ENCODE measurements at regions of chr2 and their contacts with region 1.

Region 1: GRCh38 chr2:44342854-44343253 is 18.4 kb downstream of the PREPL start:
- DNase-seq: no peak
- ATAC-seq: no peak
- H3K4me3 Mint-ChIP-seq: no peak overlapping the region
- H3K27ac Mint-ChIP-seq: no peak overlapping the region
- H3K4me1 Mint-ChIP-seq: no peaks in the 10 kb centered on the region
- H3K27me3 Mint-ChIP-seq: no peaks in the 10 kb centered on the region
- CTCF ChIP-seq: no peak

Region 2: DNA sequence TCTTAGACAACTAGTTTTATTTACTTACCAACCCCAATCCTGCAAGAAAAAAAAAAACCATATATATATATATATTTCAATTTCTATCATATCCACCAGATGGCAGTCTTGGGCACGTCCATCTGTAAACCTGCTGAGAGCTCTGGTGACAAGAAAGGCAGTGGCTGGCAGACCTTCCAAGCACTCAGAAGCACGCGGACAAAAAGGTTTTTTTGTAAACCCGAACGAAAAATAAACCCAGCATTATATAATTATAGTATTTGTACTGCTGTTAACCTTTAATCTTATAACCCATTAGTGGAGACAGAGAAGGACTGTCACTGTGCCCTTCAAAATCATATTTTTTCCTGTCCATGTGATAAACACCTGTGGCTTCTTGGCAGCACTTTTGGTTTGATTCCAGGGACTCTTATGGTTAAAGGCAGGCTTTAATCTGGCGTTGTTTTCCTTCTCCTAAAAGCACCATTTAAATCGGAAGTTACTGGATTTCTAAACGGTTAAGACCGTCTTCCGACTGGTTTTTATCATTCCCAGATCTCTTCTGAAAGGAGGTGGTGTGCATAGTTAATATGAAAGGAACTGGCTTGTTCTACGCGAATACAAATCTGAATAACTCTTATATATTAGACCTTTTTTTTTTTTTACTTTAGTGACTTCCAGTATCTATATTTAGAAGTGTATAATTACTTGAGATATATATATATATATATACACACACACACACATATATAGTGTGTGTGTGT is 98.6 kb before region 1 on chr2:
- CTCF ChIA-PET with region 1: interaction called, 3 read pairs
- POLR2A ChIA-PET with region 1: no interaction called
- intact Hi-C with region 1: loop called (anchors 1 kb)
- DNase-seq: no peak
- ATAC-seq: peak; percentile 91
- H3K4me3 Mint-ChIP-seq: peak overlapping the region; percentile 67
- H3K27ac Mint-ChIP-seq: peak overlapping the region; percentile 27
- H3K4me1 Mint-ChIP-seq: peaks cover 12% of the 10 kb centered on the region
- H3K27me3 Mint-ChIP-seq: no peaks in the 10 kb centered on the region
- CTCF ChIP-seq: no peak

Region 3: GRCh38 chr2:44324971-44325426 is 17.9 kb before region 1 on chr2:
- CTCF ChIA-PET with region 1: no interaction called
- POLR2A ChIA-PET with region 1: no interaction called
- intact Hi-C with region 1: no loop called
- DNase-seq: no peak
- ATAC-seq: no peak
- H3K4me3 Mint-ChIP-seq: no peak overlapping the region
- H3K27ac Mint-ChIP-seq: no peak overlapping the region
- H3K4me1 Mint-ChIP-seq: no peaks in the 10 kb centered on the region
- H3K27me3 Mint-ChIP-seq: no peaks in the 10 kb centered on the region
- CTCF ChIP-seq: no peak

Measured in activated B cell treated with CpG ODN at 0.5 μM for 24 hours (primary cell).